ENCODE measurements at regions of chr4 and their contacts with region 1.

Region 1: DNA sequence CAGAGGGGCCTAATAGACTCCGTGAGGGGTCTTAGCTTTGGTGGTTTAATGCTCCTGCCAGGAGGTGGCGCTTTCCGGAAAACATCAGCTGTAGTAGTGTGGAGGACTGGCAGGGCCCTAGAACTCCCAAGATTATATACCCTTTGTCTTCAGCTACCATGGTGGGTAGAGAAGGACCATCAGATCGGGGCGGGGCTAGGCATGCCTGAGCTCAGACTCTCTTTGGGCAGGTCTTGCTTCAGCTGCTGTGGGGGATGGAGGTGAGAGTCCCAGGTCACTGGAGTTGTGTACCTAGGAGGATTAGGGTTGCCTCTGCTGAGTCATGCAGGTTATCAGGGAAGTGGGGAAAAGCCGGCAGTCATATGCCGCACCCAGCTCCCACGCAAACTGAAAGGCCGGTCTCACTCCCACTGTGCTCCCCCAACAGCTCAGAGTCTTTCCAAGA is 63.0 kb upstream of the AGA start:
- DNase-seq: peak; percentile 65
- ATAC-seq: peak; percentile 97
- H3K4me3 Mint-ChIP-seq: no peak overlapping the region
- H3K27ac Mint-ChIP-seq: no peak overlapping the region
- H3K4me1 Mint-ChIP-seq: peaks cover 33% of the 10 kb centered on the region
- H3K27me3 Mint-ChIP-seq: no peaks in the 10 kb centered on the region
- CTCF ChIP-seq: no peak; the same call in 1 of the 2 replicates

Region 2: GRCh38 chr4:177380730-177381287 is 124.4 kb before region 1 on chr4:
- CTCF ChIA-PET with region 1: interaction called, 10 read pairs
- POLR2A ChIA-PET with region 1: no interaction called
- DNase-seq: peak; percentile 71
- ATAC-seq: peak; percentile 99
- H3K4me3 Mint-ChIP-seq: no peak overlapping the region
- H3K27ac Mint-ChIP-seq: no peak overlapping the region
- H3K4me1 Mint-ChIP-seq: peaks cover 8% of the 10 kb centered on the region
- H3K27me3 Mint-ChIP-seq: no peaks in the 10 kb centered on the region
- CTCF ChIP-seq: no peak

Region 3: DNA sequence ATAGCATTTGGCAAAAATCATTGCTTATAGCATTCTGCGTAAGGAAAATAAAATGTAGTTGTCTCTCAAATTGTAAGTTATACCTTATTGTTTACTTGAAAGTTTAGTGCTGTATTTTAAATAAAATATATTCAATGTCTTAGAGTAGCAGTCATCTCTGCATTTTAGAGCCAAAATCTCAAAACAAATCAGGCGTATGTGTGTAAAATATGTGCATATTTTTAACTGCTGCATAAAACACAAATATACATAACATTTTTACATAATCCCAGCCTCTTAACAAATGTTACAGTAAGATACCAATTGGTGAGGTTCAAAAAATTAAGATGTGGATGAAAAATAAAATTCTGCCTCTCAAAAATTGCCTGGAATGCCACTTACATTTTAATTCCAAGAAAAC is 82.8 kb after region 1 on chr4:
- CTCF ChIA-PET with region 1: no interaction called
- POLR2A ChIA-PET with region 1: no interaction called
- DNase-seq: no peak
- ATAC-seq: no peak
- H3K4me3 Mint-ChIP-seq: no peak overlapping the region
- H3K27ac Mint-ChIP-seq: no peak overlapping the region
- H3K4me1 Mint-ChIP-seq: peaks cover 20% of the 10 kb centered on the region
- H3K27me3 Mint-ChIP-seq: no peaks in the 10 kb centered on the region
- CTCF ChIP-seq: no peak

Region 4: DNA sequence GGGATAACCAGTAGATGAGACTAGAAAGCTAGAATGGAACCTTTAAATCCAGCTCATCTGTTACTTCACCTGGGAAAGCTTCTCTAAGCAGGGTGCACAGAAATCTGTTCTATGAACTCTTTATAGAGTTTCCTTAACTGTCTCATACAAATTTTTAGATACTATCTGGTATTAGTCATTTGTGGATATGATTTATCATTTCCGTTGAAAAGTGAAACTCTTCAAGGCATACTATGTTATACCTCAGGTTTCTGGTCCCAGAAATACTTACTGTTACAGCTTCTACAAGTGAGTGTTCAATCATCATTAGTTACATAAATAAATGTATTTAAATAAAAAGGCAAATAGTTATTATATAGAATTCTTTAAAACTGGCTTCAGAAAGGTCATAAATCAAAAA is 235.4 kb after region 1 on chr4:
- CTCF ChIA-PET with region 1: no interaction called
- POLR2A ChIA-PET with region 1: no interaction called
- DNase-seq: no peak
- ATAC-seq: no peak
- H3K4me3 Mint-ChIP-seq: no peak overlapping the region
- H3K27ac Mint-ChIP-seq: no peak overlapping the region
- H3K4me1 Mint-ChIP-seq: no peaks in the 10 kb centered on the region
- H3K27me3 Mint-ChIP-seq: no peaks in the 10 kb centered on the region
- CTCF ChIP-seq: no peak